GM12878 (cell line): ENCODE measurements at regions of chr1 and their contacts with region 1.

Region 1: GRCh38 chr1:151098126-151098525 is 27.6 kb downstream of the GABPB2 start:
- DNase-seq: no peak
- ATAC-seq: no peak
- H3K4me3 ChIP-seq: no peak overlapping the region
- H3K27ac ChIP-seq: no peak overlapping the region
- H3K4me1 ChIP-seq: no peaks in the 10 kb centered on the region
- H3K27me3 ChIP-seq: no peaks in the 10 kb centered on the region
- CTCF ChIP-seq: no peak
- EP300 ChIP-seq: no peak
- POLR2A ChIP-seq: no peak
- RAD21 ChIP-seq: no peak

Region 2: DNA sequence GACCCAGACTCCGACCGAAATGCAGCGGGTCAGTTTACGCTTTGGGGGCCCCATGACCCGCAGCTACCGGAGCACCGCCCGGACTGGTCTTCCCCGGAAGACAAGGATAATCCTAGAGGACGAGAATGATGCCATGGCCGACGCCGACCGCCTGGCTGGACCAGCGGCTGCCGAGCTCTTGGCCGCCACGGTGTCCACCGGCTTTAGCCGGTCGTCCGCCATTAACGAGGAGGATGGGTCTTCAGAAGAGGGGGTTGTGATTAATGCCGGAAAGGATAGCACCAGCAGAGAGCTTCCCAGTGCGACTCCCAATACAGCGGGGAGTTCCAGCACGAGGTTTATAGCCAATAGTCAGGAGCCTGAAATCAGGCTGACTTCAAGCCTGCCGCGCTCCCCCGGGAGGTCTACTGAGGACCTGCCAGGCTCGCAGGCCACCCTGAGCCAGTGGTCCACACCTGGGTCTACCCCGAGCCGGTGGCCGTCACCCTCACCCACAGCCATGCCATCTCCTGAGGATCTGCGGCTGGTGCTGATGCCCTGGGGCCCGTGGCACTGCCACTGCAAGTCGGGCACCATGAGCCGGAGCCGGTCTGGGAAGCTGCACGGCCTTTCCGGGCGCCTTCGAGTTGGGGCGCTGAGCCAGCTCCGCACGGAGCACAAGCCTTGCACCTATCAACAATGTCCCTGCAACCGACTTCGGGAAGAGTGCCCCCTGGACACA is 50.0 kb before region 1 on chr1:
- CTCF ChIA-PET with region 1: interaction called, 13 read pairs
- POLR2A ChIA-PET with region 1: interaction called, 3 read pairs
- RAD21 ChIA-PET with region 1: interaction called, 4 read pairs
- SMC1A ChIA-PET with region 1: interaction called, 8 read pairs
- in situ Hi-C with region 1: no loop called
- intact Hi-C with region 1: no loop called
- DNase-seq: no peak
- ATAC-seq: peak; percentile 85
- H3K4me3 ChIP-seq: peak overlapping the region; percentile 87
- H3K27ac ChIP-seq: peak overlapping the region; percentile 49
- H3K4me1 ChIP-seq: peaks cover 8% of the 10 kb centered on the region; the same call in 1 of the 2 replicates
- H3K27me3 ChIP-seq: no peaks in the 10 kb centered on the region
- CTCF ChIP-seq: peak in 2 of 3 experiments; percentile 47 to 54; a peak in 5 of 6 replicates
- EP300 ChIP-seq: no peak
- POLR2A ChIP-seq: peak; percentile 77; the same call in 1 of the 2 replicates
- RAD21 ChIP-seq: no peak

Region 3: DNA sequence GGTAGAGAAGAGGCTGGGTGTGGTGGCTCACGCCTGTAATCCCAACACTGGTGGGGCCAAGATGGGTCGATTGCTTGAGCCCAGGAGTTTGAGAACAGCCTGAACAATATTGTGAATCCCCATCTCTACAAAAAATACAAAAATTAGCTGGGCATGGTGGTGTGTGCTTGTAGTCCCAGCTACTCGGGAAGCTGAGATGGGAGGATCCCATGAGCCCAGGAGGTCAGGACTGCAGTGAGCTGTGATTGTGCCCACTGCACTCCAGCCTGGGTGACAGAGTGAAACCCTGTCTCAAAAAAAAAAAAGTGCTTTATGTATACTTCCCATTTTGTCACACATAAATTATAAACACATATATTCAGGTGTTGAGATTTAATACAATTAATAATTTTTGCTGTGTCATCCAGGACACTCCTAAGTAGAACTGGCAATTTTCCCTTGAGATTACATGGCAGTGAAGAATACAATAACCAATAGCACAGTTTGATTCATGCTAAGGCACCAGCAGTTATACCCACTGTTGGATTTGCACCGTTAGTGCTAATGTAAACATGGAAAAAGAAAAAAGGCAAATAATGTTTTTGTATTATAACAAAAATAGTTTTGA is 12.1 kb before region 1 on chr1:
- CTCF ChIA-PET with region 1: interaction called, 18 read pairs
- POLR2A ChIA-PET with region 1: interaction called, 3 read pairs
- RAD21 ChIA-PET with region 1: interaction called, 7 read pairs
- SMC1A ChIA-PET with region 1: interaction called, 5 read pairs
- in situ Hi-C with region 1: no loop called
- intact Hi-C with region 1: no loop called
- DNase-seq: no peak
- ATAC-seq: no peak
- H3K4me3 ChIP-seq: no peak overlapping the region
- H3K27ac ChIP-seq: no peak overlapping the region
- H3K4me1 ChIP-seq: no peaks in the 10 kb centered on the region
- H3K27me3 ChIP-seq: no peaks in the 10 kb centered on the region
- CTCF ChIP-seq: no peak
- EP300 ChIP-seq: no peak
- POLR2A ChIP-seq: no peak
- RAD21 ChIP-seq: no peak

Region 4: DNA sequence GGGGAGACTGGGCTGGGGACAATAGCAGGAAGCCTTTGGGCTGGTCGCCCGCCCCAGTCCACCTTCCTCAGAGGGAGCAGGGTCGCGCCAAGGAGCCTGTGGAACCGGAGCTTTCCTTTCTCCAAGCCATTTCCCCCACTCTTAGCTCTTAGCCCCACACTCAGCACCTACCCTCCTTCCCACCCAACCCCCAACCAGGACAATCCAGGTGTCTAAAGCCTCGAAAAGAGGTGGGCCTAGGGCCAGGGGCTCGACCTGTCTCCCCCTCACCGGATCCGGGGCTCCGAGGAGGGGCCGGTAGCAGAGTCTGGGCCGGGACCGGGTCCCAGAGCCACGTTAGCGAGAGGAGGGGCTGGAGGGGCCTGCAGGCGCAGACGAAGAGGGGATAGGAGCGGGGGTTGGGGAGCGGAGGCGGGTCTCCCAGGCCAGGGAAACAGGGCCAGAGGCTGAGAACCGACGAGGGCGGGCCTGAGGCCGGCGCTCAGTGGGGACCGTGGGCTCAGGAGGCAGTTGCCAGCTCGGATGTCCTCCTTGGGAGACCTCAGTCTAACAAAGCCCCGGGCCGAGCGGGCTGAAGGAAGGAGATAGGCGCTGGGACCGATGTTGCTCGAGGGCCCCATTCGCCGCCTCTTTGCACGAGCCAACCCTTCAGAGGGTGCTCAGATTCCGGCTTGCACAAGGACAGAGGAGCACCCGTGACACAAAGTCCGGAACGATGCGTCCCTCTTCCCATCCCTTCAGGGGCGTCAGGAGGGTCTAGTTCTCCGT is 47.4 kb after region 1 on chr1:
- CTCF ChIA-PET with region 1: interaction called, 10 read pairs
- POLR2A ChIA-PET with region 1: no interaction called
- RAD21 ChIA-PET with region 1: interaction called, 5 read pairs
- SMC1A ChIA-PET with region 1: interaction called, 4 read pairs
- in situ Hi-C with region 1: no loop called
- intact Hi-C with region 1: no loop called
- DNase-seq: no peak
- ATAC-seq: no peak
- H3K4me3 ChIP-seq: 0 out of 2 replicates have a peak overlapping the region, but pooled peaks have one; percentile 83
- H3K27ac ChIP-seq: no peak overlapping the region
- H3K4me1 ChIP-seq: no peaks in the 10 kb centered on the region; the same call in 1 of the 2 replicates
- H3K27me3 ChIP-seq: peaks cover 0 to 8% of the 10 kb centered on the region in 2 experiments
- CTCF ChIP-seq: no peak
- EP300 ChIP-seq: no peak
- POLR2A ChIP-seq: no peak
- RAD21 ChIP-seq: no peak

Region 5: GRCh38 chr1:151175910-151176309 is 77.8 kb after region 1 on chr1 and contains the start of gene TMOD4:
- CTCF ChIA-PET with region 1: interaction called, 11 read pairs
- POLR2A ChIA-PET with region 1: no interaction called
- RAD21 ChIA-PET with region 1: no interaction called
- SMC1A ChIA-PET with region 1: interaction called, 5 read pairs
- in situ Hi-C with region 1: no loop called
- intact Hi-C with region 1: no loop called
- DNase-seq: no peak
- ATAC-seq: peak; percentile 89
- H3K4me3 ChIP-seq: no peak within 1 kb of the TSS
- H3K27ac ChIP-seq: no peak within 1 kb of the TSS
- H3K4me1 ChIP-seq: no peaks in the 10 kb centered on the region
- H3K27me3 ChIP-seq: no peaks in the 10 kb centered on the region
- CTCF ChIP-seq: peak; percentile 35 to 58 (median 50)
- EP300 ChIP-seq: no peak
- POLR2A ChIP-seq: no peak
- RAD21 ChIP-seq: no peak
- polyA plus RNA-seq, gene TMOD4: 0.45 to 0.51 TPM

Region 6: DNA sequence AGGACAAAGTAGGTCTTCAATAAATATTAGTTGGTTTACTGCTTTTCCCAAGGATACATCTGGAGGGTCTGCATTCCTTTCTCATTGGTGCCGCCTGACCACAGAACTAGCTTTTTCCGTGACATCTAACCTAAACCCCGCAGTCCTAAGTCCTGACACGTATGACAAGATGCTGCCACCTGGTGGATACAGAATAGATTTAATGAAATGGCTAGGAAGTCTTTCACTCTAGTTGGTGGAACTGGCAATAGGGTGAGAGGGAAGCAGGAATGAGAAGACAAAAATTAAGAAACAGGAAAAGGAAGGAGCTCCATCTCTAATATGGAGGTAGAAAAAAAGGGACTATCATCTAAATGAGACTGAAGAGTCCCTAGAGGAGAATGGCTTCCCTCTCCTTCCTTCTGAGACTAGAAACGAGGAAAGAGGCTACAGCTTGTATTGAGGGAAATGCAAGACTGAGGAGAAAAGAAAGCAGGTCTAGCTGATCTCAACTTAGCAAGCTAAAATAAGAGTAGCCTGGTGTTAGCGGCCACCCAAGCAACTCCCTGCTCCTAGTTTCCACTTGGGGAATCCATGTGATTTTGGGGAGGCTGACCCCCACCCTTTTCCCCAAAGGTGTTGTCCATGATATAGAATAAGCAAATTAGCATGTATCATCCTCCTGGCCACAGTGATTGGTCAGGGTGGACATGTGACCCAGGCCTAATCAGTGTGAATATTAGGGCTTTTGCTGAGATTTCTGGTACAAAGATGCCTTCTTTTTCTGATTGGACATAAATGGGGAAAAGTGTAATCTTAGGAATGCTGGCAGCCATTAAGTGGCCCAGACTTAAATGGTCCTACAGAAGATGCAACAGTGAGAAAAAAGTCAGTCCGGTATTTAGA is 243.0 kb after region 1 on chr1:
- CTCF ChIA-PET with region 1: interaction called, 11 read pairs
- POLR2A ChIA-PET with region 1: no interaction called
- RAD21 ChIA-PET with region 1: interaction called, 11 read pairs
- SMC1A ChIA-PET with region 1: interaction called, 11 read pairs
- in situ Hi-C with region 1: no loop called
- intact Hi-C with region 1: no loop called
- DNase-seq: no peak
- ATAC-seq: peak; percentile 88
- H3K4me3 ChIP-seq: no peak overlapping the region
- H3K27ac ChIP-seq: no peak overlapping the region
- H3K4me1 ChIP-seq: no peaks in the 10 kb centered on the region; the same call in 1 of the 2 replicates
- H3K27me3 ChIP-seq: no peaks in the 10 kb centered on the region
- CTCF ChIP-seq: peak; percentile 63 to 78 (median 71)
- EP300 ChIP-seq: no peak
- POLR2A ChIP-seq: no peak; the same call in 1 of the 2 replicates
- RAD21 ChIP-seq: peak; percentile 77

Region 7: DNA sequence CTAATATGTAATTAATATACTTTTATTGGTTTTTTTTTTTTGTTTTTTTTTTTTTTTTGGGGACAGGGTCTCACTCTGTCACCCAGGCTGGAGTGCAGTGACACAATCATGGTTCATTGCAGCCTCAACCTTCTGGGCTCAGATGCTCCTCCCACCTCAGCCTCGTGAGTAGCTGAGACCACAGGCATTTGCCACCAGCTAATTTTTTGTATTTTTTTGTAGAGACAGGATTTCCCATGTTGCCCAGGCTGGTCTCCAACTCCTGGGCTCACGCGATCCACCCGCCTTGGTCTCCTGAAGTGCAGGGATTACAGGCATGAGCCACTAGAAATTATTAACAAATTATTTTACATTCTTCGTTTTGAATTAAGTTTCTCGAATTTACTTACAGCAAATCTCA is 378.0 kb after region 1 on chr1:
- CTCF ChIA-PET with region 1: no interaction called
- POLR2A ChIA-PET with region 1: no interaction called
- RAD21 ChIA-PET with region 1: no interaction called
- SMC1A ChIA-PET with region 1: no interaction called
- in situ Hi-C with region 1: no loop called
- intact Hi-C with region 1: no loop called
- DNase-seq: no peak
- ATAC-seq: no peak
- H3K4me3 ChIP-seq: no peak overlapping the region
- H3K27ac ChIP-seq: no peak overlapping the region
- H3K4me1 ChIP-seq: peaks cover 18% of the 10 kb centered on the region
- H3K27me3 ChIP-seq: no peaks in the 10 kb centered on the region
- CTCF ChIP-seq: no peak
- EP300 ChIP-seq: no peak
- POLR2A ChIP-seq: no peak
- RAD21 ChIP-seq: no peak